ENCODE measurements at regions of chr6 and their contacts with region 1.

Region 1: DNA sequence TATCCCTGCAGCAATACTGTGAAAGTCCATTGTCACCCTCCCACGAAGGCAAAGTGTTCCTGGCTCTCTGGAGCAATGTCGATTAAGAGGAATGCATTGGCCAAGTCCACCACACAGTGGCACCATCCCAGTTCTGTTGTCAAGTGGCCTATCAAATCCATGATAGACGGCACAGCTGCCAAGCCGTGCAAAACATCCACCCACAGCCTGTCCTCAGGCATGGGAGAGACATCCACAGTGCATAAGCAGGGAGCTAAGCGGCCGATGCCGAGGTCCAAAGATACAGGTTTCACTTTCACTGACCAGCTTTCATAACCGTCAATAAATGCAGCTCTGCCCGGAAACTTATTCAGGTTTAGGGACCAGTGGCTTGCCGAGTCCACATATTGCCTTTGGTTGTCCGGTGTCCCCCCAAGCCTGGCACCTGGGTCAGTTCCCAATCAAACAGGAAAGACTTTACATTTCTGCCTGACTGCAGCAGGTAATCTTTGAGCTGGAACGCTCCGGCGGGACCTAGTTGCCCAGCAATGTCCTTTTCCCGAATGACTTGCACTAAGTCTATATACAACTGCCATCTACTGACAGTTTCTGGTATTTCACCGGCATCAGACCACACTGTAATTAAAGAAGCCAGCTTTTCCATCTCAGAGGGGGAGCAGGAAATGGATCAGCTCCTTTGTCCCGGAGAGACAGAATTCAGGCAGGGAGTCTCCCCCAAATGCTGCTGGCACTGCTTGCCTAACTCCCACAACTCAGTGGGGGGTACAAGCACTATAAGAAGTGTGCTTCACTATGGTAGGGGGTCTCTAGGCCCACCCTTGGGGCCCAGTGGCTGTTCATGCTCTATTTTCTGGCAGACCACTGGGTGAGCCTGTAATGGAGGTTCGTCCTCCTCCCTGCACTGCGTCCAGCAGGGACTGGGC is 6.3 kb downstream of the ZKSCAN3 start:
- DNase-seq: peak; percentile 88
- H3K4me3 ChIP-seq: peak overlapping the region; percentile 49 to 66 (median 58)
- H3K27ac ChIP-seq: peak overlapping the region; percentile 84 to 94 (median 85)
- H3K4me1 ChIP-seq: peaks cover 0 to 44% (median 33%) of the 10 kb centered on the region in 4 donors
- H3K27me3 ChIP-seq: no peaks in the 10 kb centered on the region
- CTCF ChIP-seq: peak; percentile 84 to 95 (median 86)
- EP300 ChIP-seq: no peak
- POLR2A ChIP-seq: no peak

Region 2: DNA sequence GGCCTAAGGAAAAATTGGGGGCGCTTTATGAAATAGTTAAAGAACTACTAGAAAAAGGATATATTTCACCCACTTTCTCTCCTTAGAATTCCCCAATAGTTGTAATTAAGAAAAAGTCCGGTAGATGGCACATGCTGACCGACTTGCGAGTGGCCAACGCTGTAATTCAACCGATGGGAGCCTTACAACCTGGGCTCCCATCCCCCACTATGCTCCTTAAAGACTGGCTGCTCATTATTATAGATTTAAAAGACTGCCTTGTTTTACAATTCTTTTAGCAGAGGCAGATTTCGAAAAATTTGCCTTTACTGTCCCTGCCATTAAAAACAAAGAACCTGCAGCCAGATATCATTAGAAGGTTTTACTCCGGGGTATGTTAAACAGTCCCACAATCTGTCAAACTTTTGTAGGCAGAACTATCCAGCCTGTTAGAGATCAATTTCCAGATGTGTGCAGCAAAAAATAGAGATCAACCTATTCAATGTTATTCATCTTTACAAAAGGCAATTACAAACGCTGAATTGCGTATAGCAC is 1167.1 kb before region 1 on chr6:
- intact Hi-C with region 1: loop called (anchors 5 kb)
- DNase-seq: peak; percentile 79
- H3K4me3 ChIP-seq: peak overlapping the region; percentile 34 to 62 (median 58)
- H3K27ac ChIP-seq: peak overlapping the region; percentile 75 to 86 (median 79)
- H3K4me1 ChIP-seq: peaks cover 0 to 6% (median 2%) of the 10 kb centered on the region in 4 donors
- H3K27me3 ChIP-seq: no peaks in the 10 kb centered on the region
- CTCF ChIP-seq: peak; percentile 25 to 70 (median 55)
- EP300 ChIP-seq: no peak
- POLR2A ChIP-seq: no peak

Region 3: DNA sequence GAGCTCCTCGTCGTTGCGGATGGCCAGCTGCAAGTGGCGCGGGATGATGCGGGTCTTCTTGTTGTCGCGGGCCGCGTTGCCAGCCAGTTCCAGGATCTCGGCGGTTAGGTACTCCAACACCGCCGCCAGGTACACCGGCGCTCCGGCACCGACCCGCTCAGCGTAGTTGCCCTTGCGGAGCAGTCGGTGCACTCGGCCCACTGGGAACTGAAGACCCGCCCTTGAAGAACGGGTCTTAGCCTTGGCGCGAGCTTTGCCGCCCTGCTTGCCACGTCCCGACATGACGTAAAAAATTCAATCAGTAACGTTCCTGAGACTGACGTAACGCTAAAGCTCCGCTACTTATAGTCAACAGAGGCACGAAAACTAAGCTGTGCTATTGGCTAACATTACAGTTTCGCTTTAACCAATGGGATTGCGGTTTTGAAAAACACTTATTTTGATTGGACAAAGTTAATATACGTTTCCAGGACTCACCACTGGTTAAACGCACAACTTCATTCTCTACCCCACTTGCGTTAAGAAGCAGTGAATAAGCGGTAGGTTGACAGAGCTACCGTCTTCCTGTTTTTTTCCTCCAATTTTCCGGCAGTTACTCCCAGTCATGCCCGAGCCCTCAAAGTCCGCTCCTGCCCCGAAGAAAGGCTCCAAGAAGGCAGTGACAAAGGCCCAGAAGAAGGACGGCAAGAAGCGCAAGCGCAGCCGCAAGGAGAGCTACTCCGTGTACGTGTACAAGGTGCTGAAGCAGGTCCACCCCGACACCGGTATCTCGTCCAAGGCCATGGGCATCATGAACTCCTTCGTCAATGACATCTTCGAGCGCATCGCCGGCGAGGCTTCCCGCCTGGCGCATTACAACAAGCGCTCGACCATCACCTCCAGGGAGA is 517.7 kb before region 1 on chr6:
- intact Hi-C with region 1: loop called (anchors 10 kb)
- DNase-seq: peak; percentile 88
- H3K4me3 ChIP-seq: peak overlapping the region; percentile 48 to 75 (median 65)
- H3K27ac ChIP-seq: peak overlapping the region; percentile 87 to 97 (median 94)
- H3K4me1 ChIP-seq: peaks cover 0 to 37% (median 17%) of the 10 kb centered on the region in 4 donors
- H3K27me3 ChIP-seq: peaks cover 0 to 24% (median 18%) of the 10 kb centered on the region in 3 donors
- CTCF ChIP-seq: peak in 2 of 4 experiments; percentile 12 to 18
- EP300 ChIP-seq: no peak
- POLR2A ChIP-seq: peak; percentile 80 to 92

Region 4: DNA sequence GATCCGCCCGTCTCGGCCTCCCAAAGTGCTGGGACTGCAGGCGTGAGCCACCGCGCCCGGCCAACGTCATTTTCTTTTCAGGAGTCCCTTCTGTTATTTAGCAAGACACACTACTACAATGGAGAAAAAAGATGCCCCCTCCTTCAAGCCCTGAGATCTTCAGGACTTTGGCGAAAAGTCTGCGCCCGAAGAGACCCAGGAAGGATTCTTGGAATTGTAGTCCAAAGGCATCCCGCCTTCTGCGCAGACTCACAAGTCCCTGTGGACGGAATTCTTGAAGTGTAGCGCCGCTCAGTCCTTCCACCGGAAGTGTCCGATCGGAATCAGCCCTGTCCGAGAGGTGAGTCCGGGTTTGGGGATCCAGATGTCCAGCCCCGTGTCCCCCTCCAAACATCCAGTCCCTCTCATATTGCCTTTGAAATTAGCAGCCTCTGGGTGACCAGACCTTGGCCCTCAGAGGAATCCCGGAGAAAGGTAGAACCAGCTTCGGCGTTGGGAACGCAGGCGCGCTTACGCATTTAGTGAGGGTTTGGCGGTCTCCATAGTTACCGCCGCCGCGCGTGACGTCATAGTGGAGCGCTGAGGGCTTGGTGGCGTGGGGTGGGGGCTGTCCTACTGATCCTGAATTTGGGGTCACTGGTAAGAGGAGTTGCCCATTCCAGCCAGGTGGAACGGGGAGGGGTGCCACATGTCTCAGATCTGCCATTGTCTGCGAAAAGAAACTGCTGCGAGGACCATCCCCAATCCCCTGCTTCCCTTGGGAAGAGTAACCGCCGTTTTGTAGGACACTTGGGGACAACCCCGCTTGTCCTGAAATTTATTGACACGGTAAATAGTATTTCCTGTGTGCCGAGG is 275.1 kb before region 1 on chr6:
- intact Hi-C with region 1: loop called (anchors 10 kb)
- DNase-seq: peak; percentile 97
- H3K4me3 ChIP-seq: peak overlapping the region; percentile 62 to 78 (median 71)
- H3K27ac ChIP-seq: peak overlapping the region; percentile 86 to 93 (median 91)
- H3K4me1 ChIP-seq: peaks cover 0 to 14% (median 9%) of the 10 kb centered on the region in 4 donors
- H3K27me3 ChIP-seq: no peaks in the 10 kb centered on the region
- CTCF ChIP-seq: no peak
- EP300 ChIP-seq: peak in 1 of 4 donors; percentile 43
- POLR2A ChIP-seq: peak in 1 of 2 donors; percentile 41

Region 5: GRCh38 chr6:28107506-28107905 is 248.5 kb before region 1 on chr6:
- intact Hi-C with region 1: no loop called
- DNase-seq: no peak
- H3K4me3 ChIP-seq: no peak overlapping the region
- H3K27ac ChIP-seq: no peak overlapping the region
- H3K4me1 ChIP-seq: peaks cover 0 to 5% (median 2%) of the 10 kb centered on the region in 4 donors
- H3K27me3 ChIP-seq: no peaks in the 10 kb centered on the region
- CTCF ChIP-seq: no peak
- EP300 ChIP-seq: no peak
- POLR2A ChIP-seq: no peak

Region 6: GRCh38 chr6:28225056-28225834 is 130.8 kb before region 1 on chr6 and contains the start of gene ZSCAN9:
- intact Hi-C with region 1: loop called (anchors 10 kb)
- DNase-seq: peak; percentile 93
- H3K4me3 ChIP-seq: peak within 1 kb of the TSS; percentile 67 to 78 (median 71)
- H3K27ac ChIP-seq: peak within 1 kb of the TSS; percentile 81 to 87 (median 86)
- H3K4me1 ChIP-seq: peaks cover 0 to 21% (median 8%) of the 10 kb centered on the region in 4 donors
- H3K27me3 ChIP-seq: no peaks in the 10 kb centered on the region
- CTCF ChIP-seq: no peak
- EP300 ChIP-seq: peak in 1 of 4 donors; percentile 11
- POLR2A ChIP-seq: no peak
- total RNA-seq, gene ZSCAN9: 14.0 to 15.1 (median 14.8) TPM

Region 7: DNA sequence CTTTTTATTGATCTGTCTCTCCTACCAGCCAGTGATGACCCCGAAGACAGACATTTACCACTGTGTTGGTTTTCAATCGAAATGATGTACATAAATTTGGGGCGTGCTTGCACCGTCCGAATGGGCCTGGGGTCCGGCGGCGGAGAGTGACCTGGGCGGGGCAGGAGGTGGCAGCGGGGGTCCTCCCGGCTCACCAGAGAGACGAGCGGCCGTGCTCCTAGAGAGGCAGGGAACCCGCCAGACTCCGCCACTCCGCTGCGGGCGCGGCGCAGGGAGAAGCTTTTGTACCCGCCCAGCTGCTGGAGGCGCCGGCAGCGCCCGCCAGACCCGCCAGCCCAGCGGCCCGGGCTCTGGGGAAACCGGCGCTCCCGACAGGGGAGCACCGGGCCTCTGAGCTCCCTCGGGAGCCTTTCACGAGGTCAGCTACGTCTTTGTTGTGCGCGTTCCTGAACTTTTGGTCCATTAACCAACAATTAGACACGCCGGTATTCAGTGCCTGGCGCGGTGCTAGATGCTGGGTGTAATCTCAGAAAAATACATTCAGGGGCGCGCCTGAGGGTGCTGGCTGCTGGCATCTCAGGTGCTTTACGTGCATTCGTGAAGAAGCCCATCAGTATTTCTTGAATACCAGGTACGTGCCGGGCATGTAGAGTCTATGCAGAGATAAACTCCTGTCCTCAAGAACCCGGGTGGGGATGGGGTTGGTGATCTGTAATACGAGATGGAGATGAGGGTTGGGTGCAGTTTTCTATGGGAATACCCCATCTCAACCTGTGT is 74.5 kb before region 1 on chr6 and contains the start of gene PGBD1:
- intact Hi-C with region 1: loop called (anchors 5 kb)
- DNase-seq: peak; percentile 86
- H3K4me3 ChIP-seq: peak within 1 kb of the TSS; percentile 65 to 68 (median 66)
- H3K27ac ChIP-seq: peak within 1 kb of the TSS; percentile 77 to 79 (median 78)
- H3K4me1 ChIP-seq: peaks cover 0 to 18% (median 12%) of the 10 kb centered on the region in 4 donors
- H3K27me3 ChIP-seq: no peaks in the 10 kb centered on the region
- CTCF ChIP-seq: no peak
- EP300 ChIP-seq: no peak
- POLR2A ChIP-seq: peak in 1 of 2 donors; percentile 51
- total RNA-seq, gene PGBD1: 5.4 to 11.4 (median 9.2) TPM

Region 8: GRCh38 chr6:28408076-28408802 is 52.2 kb after region 1 on chr6:
- intact Hi-C with region 1: no loop called
- DNase-seq: no peak
- H3K4me3 ChIP-seq: no peak overlapping the region
- H3K27ac ChIP-seq: no peak overlapping the region
- H3K4me1 ChIP-seq: no peaks in the 10 kb centered on the region
- H3K27me3 ChIP-seq: peaks cover 0 to 12% (median 0%) of the 10 kb centered on the region in 3 donors
- CTCF ChIP-seq: no peak
- EP300 ChIP-seq: no peak
- POLR2A ChIP-seq: no peak

Region 9: GRCh38 chr6:28880894-28881780 is 525.1 kb after region 1 on chr6:
- intact Hi-C with region 1: no loop called
- DNase-seq: peak; percentile 82
- H3K4me3 ChIP-seq: peak overlapping the region; percentile 37 to 57 (median 48)
- H3K27ac ChIP-seq: peak overlapping the region in 2 of 4 donors; percentile 19 to 35
- H3K4me1 ChIP-seq: peaks cover 0 to 5% (median 0%) of the 10 kb centered on the region in 4 donors
- H3K27me3 ChIP-seq: peaks cover 0 to 6% (median 4%) of the 10 kb centered on the region in 3 donors
- CTCF ChIP-seq: no peak
- EP300 ChIP-seq: no peak
- POLR2A ChIP-seq: no peak